Naive thymus-derived CD4-positive, alpha-beta T cell (primary cell): ENCODE measurements at regions of chr2 and their contacts with region 1.

Region 1: DNA sequence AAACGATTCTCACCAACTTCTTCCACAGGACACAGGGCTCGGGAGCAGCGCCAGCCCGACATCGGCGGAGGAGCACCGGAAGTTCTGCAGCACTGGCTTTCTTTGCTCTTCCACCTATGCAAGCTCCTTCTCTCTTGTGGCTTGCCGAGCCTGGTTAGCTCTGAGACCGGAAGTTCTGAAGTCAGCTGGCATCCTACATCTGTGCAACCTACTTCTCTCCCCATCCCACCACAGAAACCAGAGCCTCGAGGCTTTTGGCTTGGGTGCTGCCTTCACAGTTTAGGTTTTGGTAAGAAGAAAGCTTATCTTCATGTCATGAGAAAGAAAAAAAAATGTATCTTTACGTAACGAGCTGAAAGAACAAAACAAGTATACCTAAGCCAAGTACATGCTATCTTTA is 111.7 kb downstream of the ANKRD44 start:
- DNase-seq: peak; percentile 56 to 98 (median 96)
- ATAC-seq: peak; percentile 94
- H3K4me3 ChIP-seq: peak overlapping the region; percentile 50
- H3K4me3 Mint-ChIP-seq: peak overlapping the region; percentile 83 to 100 (median 90)
- H3K27ac ChIP-seq: peak overlapping the region; percentile 81
- H3K27ac Mint-ChIP-seq: peak overlapping the region; percentile 93 to 100 (median 98)
- H3K4me1 ChIP-seq: peaks cover 75 to 83% of the 10 kb centered on the region in 2 donors
- H3K4me1 Mint-ChIP-seq: peaks cover 56 to 98% (median 86%) of the 10 kb centered on the region in 7 donors
- H3K27me3 ChIP-seq: no peaks in the 10 kb centered on the region
- H3K27me3 Mint-ChIP-seq: peaks cover 0 to 3% (median 0%) of the 10 kb centered on the region in 5 donors

Region 2: GRCh38 chr2:196291873-196292800 is 906.8 kb before region 1 on chr2:
- CTCF ChIA-PET with region 1: no interaction called
- POLR2A ChIA-PET with region 1: no interaction called
- intact Hi-C with region 1: no loop called
- DNase-seq: no peak
- ATAC-seq: peak; percentile 47
- H3K4me3 ChIP-seq: no peak overlapping the region
- H3K4me3 Mint-ChIP-seq: peak overlapping the region in 1 of 10 donors; percentile 31
- H3K27ac ChIP-seq: no peak overlapping the region
- H3K27ac Mint-ChIP-seq: peak overlapping the region in 3 of 9 donors; percentile 2 to 51 (median 44)
- H3K4me1 ChIP-seq: peaks cover 6 to 10% of the 10 kb centered on the region in 2 donors
- H3K4me1 Mint-ChIP-seq: peaks cover 21 to 56% (median 42%) of the 10 kb centered on the region in 7 donors
- H3K27me3 ChIP-seq: no peaks in the 10 kb centered on the region
- H3K27me3 Mint-ChIP-seq: no peaks in the 10 kb centered on the region

Region 3: GRCh38 chr2:196926562-196927375 is 272.1 kb before region 1 on chr2 and contains the start of gene PGAP1:
- CTCF ChIA-PET with region 1: no interaction called
- POLR2A ChIA-PET with region 1: no interaction called
- intact Hi-C with region 1: loop called in 1 of 2 experiments (anchors 5 kb)
- DNase-seq: peak; percentile 66 to 95 (median 72)
- ATAC-seq: peak; percentile 89
- H3K4me3 ChIP-seq: peak within 1 kb of the TSS; percentile 91
- H3K4me3 Mint-ChIP-seq: peak within 1 kb of the TSS; percentile 85 to 100 (median 96)
- H3K27ac ChIP-seq: peak within 1 kb of the TSS; percentile 79
- H3K27ac Mint-ChIP-seq: peak within 1 kb of the TSS; percentile 90 to 97 (median 94)
- H3K4me1 ChIP-seq: peaks cover 4 to 6% of the 10 kb centered on the region in 2 donors
- H3K4me1 Mint-ChIP-seq: peaks cover 22 to 43% (median 39%) of the 10 kb centered on the region in 7 donors
- H3K27me3 ChIP-seq: no peaks in the 10 kb centered on the region
- H3K27me3 Mint-ChIP-seq: peaks cover 0 to 2% (median 0%) of the 10 kb centered on the region in 5 donors
- total RNA-seq, gene PGAP1: 6.0 to 48.4 (median 6.9) TPM

Region 4: GRCh38 chr2:197042739-197043196 is 156.1 kb before region 1 on chr2:
- CTCF ChIA-PET with region 1: no interaction called
- POLR2A ChIA-PET with region 1: no interaction called
- intact Hi-C with region 1: no loop called
- DNase-seq: no peak
- ATAC-seq: no peak
- H3K4me3 ChIP-seq: no peak overlapping the region
- H3K4me3 Mint-ChIP-seq: no peak overlapping the region
- H3K27ac ChIP-seq: no peak overlapping the region
- H3K27ac Mint-ChIP-seq: peak overlapping the region in 6 of 9 donors; percentile 23 to 77 (median 74)
- H3K4me1 ChIP-seq: peaks cover 0 to 3% of the 10 kb centered on the region in 2 donors
- H3K4me1 Mint-ChIP-seq: peaks cover 9 to 50% (median 26%) of the 10 kb centered on the region in 7 donors
- H3K27me3 ChIP-seq: no peaks in the 10 kb centered on the region
- H3K27me3 Mint-ChIP-seq: no peaks in the 10 kb centered on the region

Region 5: DNA sequence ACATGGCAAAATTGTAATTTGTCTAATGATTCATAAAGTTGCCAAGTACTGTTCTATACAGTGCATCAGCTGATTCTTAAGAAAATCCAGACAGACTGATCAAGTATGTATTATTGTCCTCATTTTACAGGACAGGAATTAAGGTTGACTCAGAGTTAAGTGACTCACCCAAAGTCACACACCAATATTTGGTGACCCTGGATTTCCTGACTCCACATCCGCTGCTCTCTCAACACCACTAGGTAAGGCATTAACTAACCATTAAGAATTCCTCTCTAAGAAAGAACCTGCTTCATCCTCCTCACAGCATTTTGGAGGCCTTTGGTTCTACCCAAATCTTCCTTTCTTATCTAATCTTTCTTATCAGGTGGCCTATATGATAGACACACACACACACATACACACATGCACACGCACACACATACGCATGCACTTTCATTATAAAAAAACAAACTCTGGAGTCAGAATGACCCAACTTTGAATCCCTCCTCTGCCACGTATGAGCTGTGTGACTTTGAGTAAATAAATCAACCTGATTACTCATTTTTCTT is 39.2 kb before region 1 on chr2:
- CTCF ChIA-PET with region 1: no interaction called
- POLR2A ChIA-PET with region 1: no interaction called
- intact Hi-C with region 1: no loop called
- DNase-seq: no peak
- ATAC-seq: peak; percentile 81
- H3K4me3 ChIP-seq: no peak overlapping the region
- H3K4me3 Mint-ChIP-seq: peak overlapping the region in 5 of 10 donors; percentile 1 to 20 (median 10)
- H3K27ac ChIP-seq: peak overlapping the region; percentile 9
- H3K27ac Mint-ChIP-seq: peak overlapping the region; percentile 59 to 98 (median 78)
- H3K4me1 ChIP-seq: peaks cover 43 to 48% of the 10 kb centered on the region in 2 donors
- H3K4me1 Mint-ChIP-seq: peaks cover 61 to 86% (median 79%) of the 10 kb centered on the region in 7 donors
- H3K27me3 ChIP-seq: no peaks in the 10 kb centered on the region
- H3K27me3 Mint-ChIP-seq: no peaks in the 10 kb centered on the region

Region 6: DNA sequence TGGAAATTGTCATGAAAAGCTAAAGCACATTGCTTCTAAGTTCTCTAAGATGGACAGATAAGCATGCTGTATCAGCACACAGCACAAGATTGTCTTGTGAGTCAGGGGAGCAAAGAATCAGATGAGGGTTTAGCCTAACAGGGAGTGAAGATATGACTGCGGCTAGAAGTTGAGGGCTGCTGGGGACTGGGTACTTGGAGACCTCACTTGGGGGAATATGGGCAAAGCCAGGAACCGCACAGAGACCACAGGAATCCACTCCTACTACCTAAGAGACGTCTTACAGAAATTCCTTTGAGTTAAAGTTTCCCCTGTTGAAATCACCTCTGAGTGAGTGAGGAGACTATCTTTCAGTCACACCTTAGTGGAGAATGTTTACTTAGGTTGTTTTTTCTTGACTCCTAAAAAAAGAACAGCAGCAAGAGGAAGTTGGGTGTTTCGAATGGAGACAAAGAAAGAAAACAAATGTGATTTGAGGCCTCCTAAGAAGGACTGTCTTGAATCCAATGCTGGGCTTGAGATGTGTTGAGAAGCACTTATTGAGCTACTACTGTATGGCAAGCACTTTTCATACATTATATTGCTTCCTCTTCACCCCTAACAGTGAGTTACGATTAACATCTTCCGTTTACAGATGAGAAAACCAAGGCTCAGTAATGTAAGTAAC is 11.0 kb after region 1 on chr2:
- CTCF ChIA-PET with region 1: interaction called, 14 read pairs
- POLR2A ChIA-PET with region 1: interaction called, 254 read pairs
- intact Hi-C with region 1: loop called (anchors 1 kb)
- DNase-seq: peak in 5 of 9 donors; percentile 34 to 73 (median 50)
- ATAC-seq: peak; percentile 23
- H3K4me3 ChIP-seq: peak overlapping the region; percentile 12
- H3K4me3 Mint-ChIP-seq: peak overlapping the region; percentile 61 to 86 (median 78)
- H3K27ac ChIP-seq: peak overlapping the region; percentile 82
- H3K27ac Mint-ChIP-seq: peak overlapping the region; percentile 79 to 100 (median 98)
- H3K4me1 ChIP-seq: peaks cover 93 to 98% of the 10 kb centered on the region in 2 donors
- H3K4me1 Mint-ChIP-seq: peaks cover 76 to 99% (median 97%) of the 10 kb centered on the region in 7 donors
- H3K27me3 ChIP-seq: no peaks in the 10 kb centered on the region
- H3K27me3 Mint-ChIP-seq: no peaks in the 10 kb centered on the region

Region 7: DNA sequence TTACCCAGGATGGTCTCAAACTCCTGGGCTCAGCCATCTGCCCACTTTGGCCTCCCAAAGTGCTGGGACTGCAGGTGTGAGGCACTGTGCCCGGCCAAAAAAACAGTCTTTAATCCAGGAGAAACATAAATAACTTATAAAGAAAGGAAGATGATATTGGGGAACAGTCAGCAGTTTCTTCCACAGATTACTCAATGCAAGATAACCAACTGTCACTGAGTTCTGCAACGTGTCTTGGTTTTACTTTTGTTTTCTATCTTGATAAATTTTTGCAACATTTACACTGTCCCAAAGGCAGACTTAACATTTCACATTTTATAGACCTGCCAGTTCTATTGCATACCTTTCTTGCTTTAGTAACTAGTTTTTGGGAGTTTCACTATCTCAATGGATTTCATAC is 40.5 kb after region 1 on chr2:
- CTCF ChIA-PET with region 1: interaction called, 8 read pairs
- POLR2A ChIA-PET with region 1: interaction called, 20 read pairs
- intact Hi-C with region 1: loop called (anchors 1 kb)
- DNase-seq: peak in 1 of 9 donors; percentile 30
- ATAC-seq: peak; percentile 48
- H3K4me3 ChIP-seq: peak overlapping the region; percentile 52
- H3K4me3 Mint-ChIP-seq: peak overlapping the region; percentile 72 to 91 (median 83)
- H3K27ac ChIP-seq: peak overlapping the region; percentile 70
- H3K27ac Mint-ChIP-seq: peak overlapping the region; percentile 87 to 98 (median 94)
- H3K4me1 ChIP-seq: peaks cover 86 to 87% of the 10 kb centered on the region in 2 donors
- H3K4me1 Mint-ChIP-seq: peaks cover 62 to 95% (median 89%) of the 10 kb centered on the region in 7 donors
- H3K27me3 ChIP-seq: no peaks in the 10 kb centered on the region
- H3K27me3 Mint-ChIP-seq: no peaks in the 10 kb centered on the region

Region 8: DNA sequence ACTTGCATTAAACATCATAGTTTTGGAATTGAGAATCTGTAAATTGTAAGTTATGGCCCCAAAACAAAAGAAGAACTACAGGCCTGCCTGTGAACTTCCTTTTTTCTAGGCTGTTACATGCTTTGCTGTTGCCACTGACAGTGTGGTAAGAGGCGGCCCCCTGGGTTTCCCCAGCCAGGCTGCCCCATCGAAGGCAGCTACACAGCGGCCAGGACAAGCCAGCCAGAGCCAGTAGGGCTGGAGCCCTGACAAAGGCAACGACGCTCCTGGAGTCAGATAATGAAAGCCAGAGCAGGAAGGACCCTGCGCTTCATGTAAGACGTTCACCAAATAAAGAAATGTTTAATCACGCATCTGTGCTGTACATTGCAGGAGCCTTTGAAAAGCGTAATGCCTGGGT is 56.7 kb after region 1 on chr2:
- CTCF ChIA-PET with region 1: interaction called, 3 read pairs
- POLR2A ChIA-PET with region 1: interaction called, 41 read pairs
- intact Hi-C with region 1: loop called (anchors 1 to 2 kb)
- DNase-seq: peak in 7 of 9 donors; percentile 47 to 83 (median 56)
- ATAC-seq: peak; percentile 96
- H3K4me3 ChIP-seq: peak overlapping the region; percentile 38
- H3K4me3 Mint-ChIP-seq: peak overlapping the region; percentile 69 to 88 (median 77)
- H3K27ac ChIP-seq: peak overlapping the region; percentile 80
- H3K27ac Mint-ChIP-seq: peak overlapping the region; percentile 84 to 98 (median 94)
- H3K4me1 ChIP-seq: peaks cover 68 to 74% of the 10 kb centered on the region in 2 donors
- H3K4me1 Mint-ChIP-seq: peaks cover 58 to 98% (median 82%) of the 10 kb centered on the region in 7 donors
- H3K27me3 ChIP-seq: no peaks in the 10 kb centered on the region
- H3K27me3 Mint-ChIP-seq: no peaks in the 10 kb centered on the region

Region 9: DNA sequence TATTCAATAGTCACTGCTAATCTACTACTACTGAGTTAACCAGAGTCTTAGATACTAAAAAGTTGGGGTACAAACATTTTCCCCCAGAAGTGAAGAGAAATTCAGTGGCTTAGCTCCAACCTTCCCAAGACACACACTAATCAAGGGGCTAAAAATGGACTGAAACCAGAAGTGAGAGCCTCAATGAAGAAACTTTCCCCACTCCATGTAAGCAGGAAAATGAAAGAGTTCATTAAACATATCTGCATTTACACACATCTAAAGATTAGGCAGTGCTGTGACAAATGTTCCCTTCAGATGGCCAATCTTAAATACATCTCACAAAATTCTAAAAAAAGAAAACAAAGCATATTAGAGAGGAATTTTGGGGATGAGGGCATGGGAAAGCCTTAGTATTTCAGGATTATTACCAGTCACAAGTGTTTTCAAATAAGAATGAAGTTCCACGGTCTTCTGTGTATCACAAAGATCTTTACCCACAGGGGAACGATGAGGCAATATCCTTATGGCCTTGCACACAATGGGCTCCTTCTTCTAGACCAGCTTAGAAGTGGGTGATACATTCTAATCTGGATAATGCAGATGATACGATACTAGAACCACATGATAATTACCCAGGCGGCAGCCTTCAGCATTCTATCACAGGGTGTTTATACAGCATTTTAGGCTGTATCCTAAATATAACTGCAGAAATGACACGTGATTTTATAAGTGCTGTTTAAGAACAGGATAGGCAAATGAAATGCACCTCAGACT is 94.5 kb after region 1 on chr2:
- CTCF ChIA-PET with region 1: interaction called, 3 read pairs
- POLR2A ChIA-PET with region 1: interaction called, 19 read pairs
- intact Hi-C with region 1: loop called in 1 of 2 experiments (anchors 1 kb)
- DNase-seq: peak in 1 of 9 donors; percentile 49
- ATAC-seq: peak; percentile 80
- H3K4me3 ChIP-seq: peak overlapping the region; percentile 23
- H3K4me3 Mint-ChIP-seq: peak overlapping the region; percentile 74 to 97 (median 84)
- H3K27ac ChIP-seq: peak overlapping the region; percentile 69
- H3K27ac Mint-ChIP-seq: peak overlapping the region; percentile 87 to 99 (median 95)
- H3K4me1 ChIP-seq: peaks cover 87 to 93% of the 10 kb centered on the region in 2 donors
- H3K4me1 Mint-ChIP-seq: peaks cover 71 to 96% (median 91%) of the 10 kb centered on the region in 7 donors
- H3K27me3 ChIP-seq: no peaks in the 10 kb centered on the region
- H3K27me3 Mint-ChIP-seq: no peaks in the 10 kb centered on the region

Region 10: DNA sequence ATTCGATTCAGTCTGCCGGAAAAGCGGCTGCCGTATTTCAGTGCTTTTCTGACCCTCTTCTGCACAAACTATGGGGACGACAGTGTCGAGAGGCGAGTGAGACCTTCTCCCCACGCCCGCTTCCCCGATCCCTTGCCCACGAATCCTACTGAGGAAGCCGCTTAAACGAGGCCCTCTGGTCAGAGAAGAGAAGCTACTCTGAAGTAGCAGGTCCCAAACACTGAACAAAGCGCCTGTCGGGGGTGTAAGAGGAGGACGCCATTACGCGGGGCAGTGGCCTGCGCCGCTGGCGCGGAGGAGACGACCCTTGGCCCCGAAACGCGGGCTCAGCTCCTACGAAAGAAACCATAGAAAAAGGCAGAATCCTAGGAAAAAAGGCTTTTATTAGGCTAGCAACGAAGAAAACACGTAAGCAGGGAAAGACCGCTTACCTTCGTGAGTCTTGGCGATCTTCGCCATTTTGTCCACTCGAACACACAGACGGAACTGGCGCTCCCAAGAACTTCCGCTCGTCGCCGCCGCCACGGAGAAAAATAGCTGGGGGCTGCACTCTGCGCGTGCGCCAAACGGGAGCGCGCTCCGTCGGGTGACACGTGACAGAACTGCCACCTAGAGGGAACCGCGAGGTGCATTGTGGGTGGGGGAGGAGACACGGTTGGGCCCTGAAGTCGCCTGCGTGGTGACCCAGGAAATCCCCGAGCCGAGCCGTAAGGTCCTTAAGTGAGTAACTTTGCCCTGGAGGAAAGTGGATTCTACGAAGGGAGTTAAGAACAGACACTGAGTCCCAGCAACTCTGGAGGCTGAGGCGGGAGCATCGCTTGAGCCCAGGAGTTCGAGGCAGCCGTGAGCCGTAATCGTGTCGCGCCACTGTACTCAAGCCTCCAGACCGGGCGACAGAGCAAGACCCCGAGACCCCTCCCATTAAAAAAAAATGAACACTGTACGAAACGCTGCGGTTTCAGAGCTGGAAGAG is 235.9 kb after region 1 on chr2 and contains the start of gene SF3B1:
- CTCF ChIA-PET with region 1: no interaction called
- POLR2A ChIA-PET with region 1: interaction called, 3 read pairs
- intact Hi-C with region 1: loop called (anchors 5 kb)
- DNase-seq: peak; percentile 98 to 99 (median 99)
- ATAC-seq: peak; percentile 99
- H3K4me3 ChIP-seq: peak within 1 kb of the TSS; percentile 98
- H3K4me3 Mint-ChIP-seq: peak within 1 kb of the TSS; percentile 88 to 100 (median 98)
- H3K27ac ChIP-seq: peak within 1 kb of the TSS; percentile 98
- H3K27ac Mint-ChIP-seq: peak within 1 kb of the TSS; percentile 100
- H3K4me1 ChIP-seq: peaks cover 28 to 46% of the 10 kb centered on the region in 2 donors
- H3K4me1 Mint-ChIP-seq: peaks cover 34 to 60% (median 49%) of the 10 kb centered on the region in 7 donors
- H3K27me3 ChIP-seq: no peaks in the 10 kb centered on the region
- H3K27me3 Mint-ChIP-seq: peaks cover 0 to 3% (median 0%) of the 10 kb centered on the region in 5 donors
- total RNA-seq, gene SF3B1: 330 to 737 (median 528) TPM